PC-9 (cell line): ENCODE measurements at regions of chrX and their contacts with region 1.

Region 1: GRCh38 chrX:50691820-50692219 is 122.2 kb downstream of the SHROOM4 start:
- DNase-seq: no peak
- H3K4me3 ChIP-seq: no peak overlapping the region
- H3K27ac ChIP-seq: no peak overlapping the region
- H3K4me1 ChIP-seq: no peaks in the 10 kb centered on the region
- H3K27me3 ChIP-seq: no peaks in the 10 kb centered on the region
- CTCF ChIP-seq: peak; percentile 51

Region 2: DNA sequence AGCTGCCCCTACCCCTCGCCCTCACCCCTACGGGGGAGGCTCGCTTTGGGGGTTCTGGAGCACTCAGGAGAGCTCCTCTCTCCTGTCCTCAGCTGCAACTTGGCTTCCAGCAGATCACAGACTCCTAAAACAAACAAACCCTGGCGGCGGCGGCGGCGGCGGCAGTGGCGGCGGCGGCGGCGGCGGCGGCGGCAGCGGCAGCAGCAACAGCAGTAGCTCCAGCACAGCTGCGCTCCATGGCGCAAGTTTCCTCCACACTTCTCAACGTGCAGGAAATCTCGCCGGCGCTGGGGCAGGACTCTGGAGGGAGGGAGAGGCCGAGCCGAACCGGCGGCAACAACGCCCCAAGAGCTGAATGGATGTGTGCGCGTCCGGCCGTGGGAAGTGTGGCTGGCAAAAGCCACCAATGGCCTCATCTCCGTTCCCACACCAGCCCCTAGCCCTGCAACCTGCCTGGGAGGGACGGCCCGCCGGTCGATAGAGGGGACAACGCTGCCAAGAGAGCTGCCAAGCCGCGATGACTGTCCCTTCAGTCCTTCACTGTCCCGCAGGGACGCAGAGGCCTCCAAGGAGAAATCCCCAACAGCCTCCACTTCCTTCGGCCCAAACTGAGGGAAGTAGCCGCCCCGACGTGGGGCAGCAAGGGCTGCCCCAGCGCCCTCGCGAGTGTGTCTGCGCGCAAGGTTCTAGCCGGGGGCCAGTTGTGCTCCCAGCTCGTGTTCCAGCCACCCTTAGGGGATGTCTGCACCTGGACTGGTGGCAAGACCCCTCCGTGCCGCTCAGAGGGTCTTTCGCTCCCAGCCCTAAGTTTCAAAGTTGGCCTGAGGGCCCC is 121.4 kb after region 1 on chrX:
- CTCF ChIA-PET with region 1: no interaction called
- POLR2A ChIA-PET with region 1: no interaction called
- intact Hi-C with region 1: loop called (anchors 10 kb)
- DNase-seq: no peak
- H3K4me3 ChIP-seq: peak overlapping the region; percentile 46; the same call in 1 of the 2 replicates
- H3K27ac ChIP-seq: no peak overlapping the region
- H3K4me1 ChIP-seq: no peaks in the 10 kb centered on the region
- H3K27me3 ChIP-seq: no peaks in the 10 kb centered on the region
- CTCF ChIP-seq: no peak

Region 3: GRCh38 chrX:50905334-50905733 is 213.5 kb after region 1 on chrX:
- CTCF ChIA-PET with region 1: no interaction called
- POLR2A ChIA-PET with region 1: no interaction called
- intact Hi-C with region 1: loop called (anchors 5 kb)
- DNase-seq: peak in 1 of 2 experiments; percentile 4
- H3K4me3 ChIP-seq: no peak overlapping the region
- H3K27ac ChIP-seq: no peak overlapping the region
- H3K4me1 ChIP-seq: no peaks in the 10 kb centered on the region
- H3K27me3 ChIP-seq: no peaks in the 10 kb centered on the region
- CTCF ChIP-seq: peak; percentile 52